Testis (tissue), 5 donors: ENCODE measurements at regions of chr19 and their contacts with region 1.

Region 1: DNA sequence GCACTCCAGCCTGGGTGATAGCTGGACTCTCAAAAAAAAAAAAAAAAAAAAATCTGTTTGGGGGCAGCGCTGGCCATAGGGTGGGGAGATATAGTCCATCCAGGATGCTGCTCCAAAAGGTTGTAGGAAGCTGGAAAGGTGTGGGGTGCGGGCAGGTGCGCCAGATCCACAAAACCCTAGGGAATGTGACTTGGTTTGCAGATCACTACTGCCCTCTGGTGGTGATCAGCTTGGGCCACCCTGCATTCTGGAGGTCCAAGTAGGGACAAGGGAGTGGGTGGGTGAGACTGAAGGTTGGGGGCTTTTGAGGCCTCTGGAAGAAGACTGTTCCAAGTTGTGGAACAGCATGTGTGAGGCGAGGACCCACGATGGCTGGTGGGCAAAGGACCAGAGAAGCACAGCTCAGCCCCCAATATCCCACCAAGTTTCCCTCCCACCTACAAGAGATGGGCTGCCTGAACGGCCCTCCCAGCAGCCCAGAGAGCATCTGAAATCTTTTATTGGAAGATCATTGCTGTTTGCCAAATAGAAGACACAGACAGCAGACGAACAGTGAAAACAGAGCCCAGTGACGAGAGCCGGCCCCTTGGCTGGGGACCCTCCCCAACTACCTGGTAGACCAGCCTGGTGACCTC is 10.4 kb upstream of the TYK2 start:
- DNase-seq: peak; percentile 82
- H3K4me3 ChIP-seq: no peak overlapping the region
- H3K27ac ChIP-seq: no peak overlapping the region
- H3K4me1 ChIP-seq: no peaks in the 10 kb centered on the region
- H3K27me3 ChIP-seq: no peaks in the 10 kb centered on the region
- CTCF ChIP-seq: peak; percentile 60 to 82 (median 78)
- POLR2A ChIP-seq: no peak

Region 2: GRCh38 chr19:10259162-10259905 is 131.4 kb before region 1 on chr19:
- intact Hi-C with region 1: loop called (anchors 5 kb)
- DNase-seq: peak; percentile 93
- H3K4me3 ChIP-seq: no peak overlapping the region
- H3K27ac ChIP-seq: no peak overlapping the region
- H3K4me1 ChIP-seq: no peaks in the 10 kb centered on the region
- H3K27me3 ChIP-seq: no peaks in the 10 kb centered on the region
- CTCF ChIP-seq: peak in 2 of 3 experiments; percentile 34 to 61
- POLR2A ChIP-seq: no peak

Region 3: DNA sequence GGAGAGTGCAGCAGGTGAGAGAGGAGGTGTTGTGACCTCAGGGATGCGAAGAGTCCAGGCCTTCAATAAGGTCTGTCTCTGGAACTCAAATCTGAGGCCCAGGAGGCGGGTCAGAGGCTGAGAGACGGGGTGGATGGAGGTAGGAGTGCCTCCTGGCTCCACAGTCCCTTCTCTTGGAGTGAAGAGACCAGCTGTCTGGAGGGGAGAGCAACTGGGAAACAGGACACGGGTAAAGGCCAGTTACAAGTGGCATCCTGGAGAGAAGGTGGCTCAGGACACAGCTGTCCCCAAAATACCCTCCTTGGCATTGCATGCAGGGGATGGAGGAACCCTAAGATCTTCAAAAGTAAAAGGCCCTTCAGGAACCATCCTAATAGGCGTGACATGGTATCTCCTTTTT is 48.8 kb after region 1 on chr19:
- intact Hi-C with region 1: no loop called
- DNase-seq: no peak
- H3K4me3 ChIP-seq: no peak overlapping the region
- H3K27ac ChIP-seq: no peak overlapping the region
- H3K4me1 ChIP-seq: no peaks in the 10 kb centered on the region
- H3K27me3 ChIP-seq: no peaks in the 10 kb centered on the region
- CTCF ChIP-seq: no peak
- POLR2A ChIP-seq: no peak